ENCODE measurements at regions of chr19 and their contacts with region 1.

Region 1: GRCh38 chr19:43463381-43464136 is 1.8 kb downstream of the LYPD3 start:
- DNase-seq: peak; percentile 95
- ATAC-seq: peak; percentile 94
- H3K4me3 Mint-ChIP-seq: peak overlapping the region; percentile 92
- H3K27ac Mint-ChIP-seq: peak overlapping the region; percentile 88
- H3K4me1 Mint-ChIP-seq: peaks cover 17% of the 10 kb centered on the region
- H3K27me3 Mint-ChIP-seq: peaks cover 10% of the 10 kb centered on the region
- CTCF ChIP-seq: no peak

Region 2: DNA sequence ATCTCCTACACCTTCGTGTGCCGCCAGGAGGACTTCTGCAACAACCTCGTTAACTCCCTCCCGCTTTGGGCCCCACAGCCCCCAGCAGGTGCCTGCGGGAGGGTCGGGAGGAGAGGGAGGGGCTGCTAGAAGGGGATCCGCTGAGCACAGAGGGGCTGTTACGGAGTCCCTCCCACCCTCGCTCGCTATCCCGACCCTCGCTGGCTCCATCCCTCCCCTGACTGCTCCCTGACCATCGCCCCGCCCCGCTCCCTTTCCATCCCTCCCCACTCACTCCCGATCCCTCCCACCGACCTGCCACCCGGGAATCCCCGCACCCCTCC is 109.3 kb before region 1 on chr19:
- CTCF ChIA-PET with region 1: no interaction called
- POLR2A ChIA-PET with region 1: no interaction called
- intact Hi-C with region 1: no loop called
- DNase-seq: no peak
- ATAC-seq: no peak
- H3K4me3 Mint-ChIP-seq: no peak overlapping the region
- H3K27ac Mint-ChIP-seq: no peak overlapping the region
- H3K4me1 Mint-ChIP-seq: no peaks in the 10 kb centered on the region
- H3K27me3 Mint-ChIP-seq: peaks cover 13% of the 10 kb centered on the region
- CTCF ChIP-seq: no peak

Region 3: GRCh38 chr19:43433358-43433673 is 30.2 kb before region 1 on chr19:
- CTCF ChIA-PET with region 1: no interaction called
- POLR2A ChIA-PET with region 1: no interaction called
- intact Hi-C with region 1: no loop called
- DNase-seq: no peak
- ATAC-seq: no peak
- H3K4me3 Mint-ChIP-seq: no peak overlapping the region
- H3K27ac Mint-ChIP-seq: no peak overlapping the region
- H3K4me1 Mint-ChIP-seq: peaks cover 33% of the 10 kb centered on the region
- H3K27me3 Mint-ChIP-seq: no peaks in the 10 kb centered on the region
- CTCF ChIP-seq: no peak

Region 4: DNA sequence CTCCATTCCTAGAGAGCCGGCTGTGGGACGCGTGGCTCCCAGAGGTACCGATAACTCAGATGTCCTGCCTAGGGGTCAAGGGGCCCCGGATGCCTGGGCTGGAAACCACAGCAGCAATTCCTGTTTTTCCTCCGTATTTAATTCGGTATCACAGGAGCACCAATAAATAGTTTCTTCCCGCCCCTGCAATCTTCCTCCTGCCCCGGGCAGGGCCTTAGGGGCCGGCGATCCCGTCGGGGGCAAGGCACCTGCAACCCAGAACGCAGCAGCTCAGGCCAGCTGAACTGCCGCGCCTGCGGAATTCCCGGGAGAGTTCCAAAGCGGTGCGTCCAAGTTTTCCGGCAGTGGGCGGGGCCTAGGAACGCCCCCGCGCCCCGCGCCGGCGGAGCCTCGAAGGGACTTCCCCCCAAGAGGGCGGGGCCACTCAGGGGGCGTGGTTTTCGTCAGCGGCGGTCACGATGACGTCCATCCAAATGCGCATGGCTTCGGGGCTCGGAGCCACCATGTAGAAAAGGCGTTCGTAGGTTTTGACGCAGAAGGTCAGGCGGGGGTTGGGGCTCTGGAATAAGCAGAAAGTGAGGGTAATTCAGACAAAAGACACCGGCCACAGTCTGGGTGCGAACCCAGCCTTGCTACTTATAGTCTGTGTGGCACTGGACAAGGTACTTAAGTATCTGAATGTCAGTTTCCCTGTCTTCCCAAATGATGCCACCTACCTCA is 11.6 kb after region 1 on chr19:
- CTCF ChIA-PET with region 1: no interaction called
- POLR2A ChIA-PET with region 1: interaction called, 23 read pairs
- intact Hi-C with region 1: loop called (anchors 1 kb)
- DNase-seq: peak; percentile 93
- ATAC-seq: peak; percentile 98
- H3K4me3 Mint-ChIP-seq: peak overlapping the region; percentile 83
- H3K27ac Mint-ChIP-seq: peak overlapping the region; percentile 77
- H3K4me1 Mint-ChIP-seq: peaks cover 14% of the 10 kb centered on the region
- H3K27me3 Mint-ChIP-seq: no peaks in the 10 kb centered on the region
- CTCF ChIP-seq: no peak

Region 5: GRCh38 chr19:43519436-43520088 is 56.0 kb after region 1 on chr19:
- CTCF ChIA-PET with region 1: interaction called, 17 read pairs
- POLR2A ChIA-PET with region 1: interaction called, 5 read pairs
- intact Hi-C with region 1: no loop called
- DNase-seq: peak; percentile 57
- ATAC-seq: peak; percentile 51
- H3K4me3 Mint-ChIP-seq: peak overlapping the region; percentile 44
- H3K27ac Mint-ChIP-seq: peak overlapping the region; percentile 15
- H3K4me1 Mint-ChIP-seq: peaks cover 18% of the 10 kb centered on the region
- H3K27me3 Mint-ChIP-seq: no peaks in the 10 kb centered on the region
- CTCF ChIP-seq: peak; percentile 62

Region 6: GRCh38 chr19:43562698-43563241 is 99.2 kb after region 1 on chr19:
- CTCF ChIA-PET with region 1: no interaction called
- POLR2A ChIA-PET with region 1: no interaction called
- intact Hi-C with region 1: loop called (anchors 1 kb)
- DNase-seq: peak; percentile 56
- ATAC-seq: peak; percentile 84
- H3K4me3 Mint-ChIP-seq: peak overlapping the region; percentile 56
- H3K27ac Mint-ChIP-seq: peak overlapping the region; percentile 93
- H3K4me1 Mint-ChIP-seq: peaks cover 58% of the 10 kb centered on the region
- H3K27me3 Mint-ChIP-seq: no peaks in the 10 kb centered on the region
- CTCF ChIP-seq: no peak

Region 7: GRCh38 chr19:43668406-43669158 is 205.0 kb after region 1 on chr19:
- CTCF ChIA-PET with region 1: no interaction called
- POLR2A ChIA-PET with region 1: interaction called, 5 read pairs
- intact Hi-C with region 1: loop called (anchors 1 kb)
- DNase-seq: peak; percentile 76
- ATAC-seq: peak; percentile 88
- H3K4me3 Mint-ChIP-seq: peak overlapping the region; percentile 80
- H3K27ac Mint-ChIP-seq: peak overlapping the region; percentile 24
- H3K4me1 Mint-ChIP-seq: peaks cover 44% of the 10 kb centered on the region
- H3K27me3 Mint-ChIP-seq: peaks cover 9% of the 10 kb centered on the region
- CTCF ChIP-seq: no peak